ENCODE measurements at regions of chr11 and their contacts with region 1.

Region 1: GRCh38 chr11:9265211-9266131 is at the start of gene DENND5A:
- DNase-seq: peak; percentile 94
- H3K4me3 ChIP-seq: peak within 1 kb of the TSS; percentile 84 to 100 (median 89)
- H3K27ac ChIP-seq: peak within 1 kb of the TSS; percentile 96 to 100 (median 98)
- H3K4me1 ChIP-seq: peaks cover 29 to 38% (median 34%) of the 10 kb centered on the region in 4 donors
- H3K27me3 ChIP-seq: no peaks in the 10 kb centered on the region
- CTCF ChIP-seq: no peak
- EP300 ChIP-seq: no peak
- POLR2A ChIP-seq: peak; percentile 12
- total RNA-seq, gene DENND5A: 103 to 135 (median 108) TPM

Region 2: DNA sequence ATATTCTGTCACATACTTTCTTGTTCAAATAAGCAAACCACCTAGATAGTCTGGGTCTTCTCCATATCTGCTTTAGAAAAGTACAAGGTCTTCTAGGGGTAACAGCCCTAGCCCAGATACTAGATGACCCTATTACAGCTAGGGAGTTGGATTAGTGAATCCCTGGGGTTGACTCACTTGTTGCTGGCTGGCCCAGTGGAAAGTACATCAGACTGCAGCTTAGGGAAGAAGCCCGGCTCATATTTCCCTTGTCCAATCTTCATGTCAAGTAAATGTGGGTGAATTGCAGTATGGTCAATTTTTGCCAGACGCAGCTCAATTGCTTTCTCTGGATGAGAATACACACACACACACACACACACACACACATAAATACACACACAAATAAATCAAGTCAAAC is 95.0 kb before region 1 on chr11:
- intact Hi-C with region 1: loop called (anchors 5 kb)
- DNase-seq: no peak
- H3K4me3 ChIP-seq: no peak overlapping the region
- H3K27ac ChIP-seq: no peak overlapping the region
- H3K4me1 ChIP-seq: no peaks in the 10 kb centered on the region
- H3K27me3 ChIP-seq: no peaks in the 10 kb centered on the region
- CTCF ChIP-seq: no peak
- EP300 ChIP-seq: no peak
- POLR2A ChIP-seq: no peak

Region 3: GRCh38 chr11:9302448-9302847 is 37.0 kb after region 1 on chr11:
- intact Hi-C with region 1: no loop called
- DNase-seq: peak; percentile 4
- H3K4me3 ChIP-seq: no peak overlapping the region
- H3K27ac ChIP-seq: no peak overlapping the region
- H3K4me1 ChIP-seq: no peaks in the 10 kb centered on the region
- H3K27me3 ChIP-seq: no peaks in the 10 kb centered on the region
- CTCF ChIP-seq: no peak
- EP300 ChIP-seq: no peak
- POLR2A ChIP-seq: no peak

Region 4: GRCh38 chr11:9314291-9315036 is 49.0 kb after region 1 on chr11 and contains the start of gene TMEM41B:
- intact Hi-C with region 1: loop called (anchors 5 kb)
- DNase-seq: peak; percentile 99
- H3K4me3 ChIP-seq: peak within 1 kb of the TSS; percentile 82 to 99 (median 95)
- H3K27ac ChIP-seq: peak within 1 kb of the TSS; percentile 83 to 87 (median 85)
- H3K4me1 ChIP-seq: peaks cover 0 to 29% (median 23%) of the 10 kb centered on the region in 4 donors
- H3K27me3 ChIP-seq: peaks cover 0 to 14% (median 0%) of the 10 kb centered on the region in 4 donors
- CTCF ChIP-seq: peak in 1 of 3 experiments; percentile 18
- EP300 ChIP-seq: no peak
- POLR2A ChIP-seq: peak; percentile 36
- total RNA-seq, gene TMEM41B: 13.3 to 21.1 (median 17.4) TPM

Region 5: DNA sequence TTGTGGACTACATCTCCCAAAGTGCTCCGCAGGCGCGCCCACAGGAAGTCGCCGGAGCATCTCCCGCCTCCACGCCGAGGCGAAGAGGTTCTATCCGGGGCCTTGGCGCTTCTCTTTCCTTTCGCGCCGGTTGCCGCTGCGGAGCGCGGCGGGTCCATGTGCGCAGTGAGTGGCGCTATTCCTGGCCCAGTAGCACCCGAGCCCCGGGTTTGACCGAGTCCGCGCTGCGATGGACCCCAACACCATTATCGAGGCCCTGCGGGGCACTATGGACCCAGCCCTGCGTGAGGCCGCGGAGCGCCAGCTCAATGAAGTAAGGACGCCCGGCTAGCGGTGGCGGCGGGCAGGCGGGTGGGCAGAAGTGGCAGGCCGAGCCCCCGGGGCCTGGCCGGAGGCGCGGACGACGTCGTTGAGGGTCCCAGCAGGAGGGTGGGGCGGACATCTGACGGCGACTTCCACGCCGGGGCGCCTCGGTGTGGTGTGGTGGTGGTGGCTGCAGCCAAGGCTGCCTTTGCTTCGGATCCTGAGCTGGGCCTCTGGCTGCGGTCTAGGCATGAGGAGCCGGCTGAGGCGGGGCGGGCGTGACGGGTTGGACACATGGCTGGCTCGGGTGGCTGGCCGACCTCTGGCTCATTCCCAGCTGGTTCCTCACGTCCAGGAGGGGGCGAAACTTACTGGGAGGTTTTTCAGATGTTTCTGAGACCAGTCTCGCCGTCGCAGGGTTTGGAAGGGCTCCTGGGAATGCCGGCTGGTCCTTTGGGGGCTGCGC is 119.2 kb after region 1 on chr11 and contains the start of gene IPO7:
- intact Hi-C with region 1: loop called (anchors 10 kb)
- DNase-seq: peak; percentile 94
- H3K4me3 ChIP-seq: peak within 1 kb of the TSS; percentile 76 to 95 (median 94)
- H3K27ac ChIP-seq: peak within 1 kb of the TSS; percentile 93 to 99 (median 96)
- H3K4me1 ChIP-seq: peaks cover 33 to 65% (median 63%) of the 10 kb centered on the region in 4 donors
- H3K27me3 ChIP-seq: no peaks in the 10 kb centered on the region
- CTCF ChIP-seq: peak in 2 of 3 experiments; percentile 34 to 36
- EP300 ChIP-seq: no peak
- POLR2A ChIP-seq: peak; percentile 88
- total RNA-seq, gene IPO7: 131 to 186 (median 150) TPM

Region 6: GRCh38 chr11:9460322-9461067 is 195.0 kb after region 1 on chr11 and contains the start of gene ZNF143:
- intact Hi-C with region 1: loop called (anchors 5 kb)
- DNase-seq: peak; percentile 100
- H3K4me3 ChIP-seq: peak within 1 kb of the TSS; percentile 73 to 94 (median 78)
- H3K27ac ChIP-seq: peak within 1 kb of the TSS; percentile 94 to 99 (median 97)
- H3K4me1 ChIP-seq: peaks cover 22 to 35% (median 28%) of the 10 kb centered on the region in 4 donors
- H3K27me3 ChIP-seq: no peaks in the 10 kb centered on the region
- CTCF ChIP-seq: peak in 1 of 3 experiments; percentile 35
- EP300 ChIP-seq: no peak
- POLR2A ChIP-seq: peak; percentile 98
- total RNA-seq, gene ZNF143: 30.0 to 38.8 (median 34.5) TPM

Measured in esophagus muscularis mucosa (tissue), 4 donors.